ENCODE measurements at regions of chr6 and their contacts with region 1.

Region 1: DNA sequence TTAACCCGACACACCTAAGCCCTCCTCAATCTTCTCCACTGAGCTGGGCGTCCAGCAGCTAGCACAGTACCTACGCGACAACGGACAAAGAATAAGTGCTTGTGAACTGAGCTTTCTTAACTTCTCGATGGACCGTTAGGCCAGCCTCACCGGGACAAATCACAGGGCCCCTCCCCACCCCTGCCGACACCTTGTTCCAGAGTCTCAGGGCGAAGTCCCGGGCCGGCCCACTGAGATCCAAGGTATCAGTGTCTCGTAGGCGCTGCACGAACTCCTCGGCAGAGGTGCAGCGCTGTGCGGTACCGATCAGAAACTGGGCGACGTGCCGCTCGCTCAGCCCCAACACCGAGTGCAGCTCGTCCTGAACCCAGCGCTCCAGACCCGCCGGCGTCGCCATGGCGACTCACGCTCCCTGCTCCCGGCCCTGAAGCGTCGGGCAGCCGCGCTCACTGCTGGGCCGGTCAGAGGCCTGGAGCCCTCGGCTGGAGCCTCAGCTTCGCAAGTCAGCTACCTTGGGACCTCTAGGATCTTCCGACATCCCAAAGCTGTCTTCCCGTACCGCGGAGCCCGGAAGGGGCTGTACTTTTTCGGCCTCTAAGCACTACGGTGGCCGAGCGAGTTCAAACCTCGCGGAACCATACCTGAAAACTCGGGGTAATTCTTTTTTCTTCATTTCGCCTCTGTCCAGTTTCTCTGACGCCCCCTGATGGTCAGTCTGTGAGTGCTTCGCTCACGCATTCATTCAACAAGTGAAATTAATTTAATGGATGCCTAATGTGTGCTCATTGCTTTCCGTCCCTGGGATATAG is at the start of gene DHX16:
- DNase-seq: peak; percentile 78 to 93 (median 90)
- H3K4me3 ChIP-seq: peak within 1 kb of the TSS; percentile 63 to 100 (median 95)
- H3K27ac ChIP-seq: peak within 1 kb of the TSS in 49 of 59 donors; percentile 12 to 91 (median 69)
- H3K27me3 ChIP-seq: no peaks in the 10 kb centered on the region
- CTCF ChIP-seq: peak; percentile 78 to 100 (median 92)
- total RNA-seq, gene DHX16: 15.0 to 28.6 (median 22.7) TPM

Region 2: DNA sequence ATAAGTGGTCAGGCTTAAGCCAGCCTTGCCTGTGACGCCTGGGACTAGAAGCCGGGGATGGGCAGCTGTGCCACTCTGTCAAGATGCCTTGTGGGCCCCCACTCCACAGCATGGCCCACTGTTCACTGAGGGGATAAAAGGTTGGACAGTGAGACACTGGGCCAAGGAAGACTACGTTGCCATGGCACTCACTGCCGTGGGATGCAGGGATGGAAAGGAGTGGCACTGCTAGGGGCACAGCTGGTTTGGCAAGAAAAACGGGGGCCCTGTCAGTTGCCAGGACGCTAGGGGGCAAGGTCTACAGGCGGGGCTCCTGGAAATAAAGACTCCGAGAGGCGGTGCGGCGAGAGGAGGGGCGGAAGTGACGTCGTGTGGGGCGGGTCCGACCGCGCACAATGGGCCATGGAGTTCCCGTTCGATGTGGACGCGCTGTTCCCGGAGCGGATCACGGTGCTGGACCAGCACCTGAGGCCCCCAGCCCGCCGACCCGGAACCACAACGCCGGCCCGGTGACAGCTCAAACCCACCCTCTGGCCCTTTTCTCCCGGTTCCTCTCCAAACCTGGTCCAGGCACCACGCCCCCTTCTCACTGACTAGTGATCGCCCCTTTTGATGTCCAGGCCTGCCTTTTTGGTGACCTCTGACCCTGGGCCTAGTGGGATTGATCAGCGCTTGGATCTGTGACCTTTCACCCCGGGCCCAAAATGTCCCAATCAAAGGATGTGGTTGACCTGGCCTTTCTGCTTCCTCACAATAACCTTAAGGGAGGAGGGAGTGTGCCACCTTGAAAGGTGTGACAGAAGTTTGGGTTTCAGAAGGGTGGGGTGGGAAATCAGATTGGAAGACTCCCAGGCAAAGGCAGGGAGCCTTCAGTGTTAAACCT is 45.9 kb before region 1 on chr6 and contains the start of gene ATAT1:
- intact Hi-C with region 1: loop called in 1 of 2 experiments (anchors 2 kb)
- DNase-seq: peak; percentile 90 to 96 (median 93)
- H3K4me3 ChIP-seq: peak within 1 kb of the TSS; percentile 44 to 88 (median 73)
- H3K27ac ChIP-seq: peak within 1 kb of the TSS; percentile 48 to 98 (median 93)
- H3K27me3 ChIP-seq: no peaks in the 10 kb centered on the region
- CTCF ChIP-seq: peak; percentile 20 to 75 (median 60)
- total RNA-seq, gene ATAT1: 24.7 to 47.2 (median 35.8) TPM

Region 3: DNA sequence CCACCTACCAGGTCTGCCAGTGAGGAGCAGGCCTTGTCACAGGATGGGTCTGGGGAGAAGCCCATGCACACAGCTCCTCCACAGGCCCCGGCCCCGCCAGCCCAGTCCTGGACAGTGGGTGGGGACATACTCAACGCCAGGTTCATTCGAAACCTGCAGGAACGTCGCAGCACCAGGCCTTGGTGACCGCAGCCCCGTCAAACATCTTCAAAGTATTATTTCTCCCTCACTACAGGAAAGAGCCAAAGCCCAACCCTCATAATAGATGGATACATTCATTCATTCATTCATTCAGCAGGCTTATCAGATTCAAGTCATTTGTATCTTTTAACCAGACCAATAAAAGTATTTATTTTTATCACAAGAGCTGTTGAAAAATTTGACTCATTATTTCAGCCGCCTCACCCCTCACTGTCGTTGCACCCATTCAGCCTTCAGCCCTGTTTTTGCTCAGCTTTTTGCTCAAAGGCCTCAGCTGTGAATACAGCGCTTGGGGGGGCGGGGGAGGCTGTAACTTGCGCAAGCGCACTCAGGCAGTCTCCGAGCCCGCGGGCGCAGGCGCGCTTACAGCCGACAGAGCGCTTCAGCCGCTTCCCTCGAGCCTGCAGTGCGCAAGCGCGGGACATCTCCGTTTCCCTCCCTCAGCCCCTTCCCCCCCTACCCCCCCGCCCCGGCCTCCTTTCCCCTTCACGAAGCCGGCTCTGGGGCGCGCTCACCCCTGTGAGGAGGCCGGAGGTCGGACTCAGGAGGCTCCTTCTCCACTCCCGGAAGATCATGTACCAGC is 26.0 kb before region 1 on chr6 and contains the start of gene C6orf136:
- intact Hi-C with region 1: loop called in 1 of 2 experiments (anchors 2 kb)
- DNase-seq: peak; percentile 90 to 96 (median 94)
- H3K4me3 ChIP-seq: peak within 1 kb of the TSS; percentile 58 to 100 (median 94)
- H3K27ac ChIP-seq: peak within 1 kb of the TSS; percentile 58 to 99 (median 96)
- H3K27me3 ChIP-seq: no peaks in the 10 kb centered on the region
- CTCF ChIP-seq: peak in 25 of 56 donors; percentile 7 to 55 (median 24)
- total RNA-seq, gene C6orf136: 30.6 to 105 (median 61.8) TPM